ENCODE measurements at regions of chr1 and their contacts with region 1.

Region 1: GRCh38 chr1:153532769-153533599 is 2.8 kb downstream of the S100A6 start:
- DNase-seq: peak; percentile 86
- ATAC-seq: peak; percentile 19
- H3K4me3 Mint-ChIP-seq: peak overlapping the region; percentile 95
- H3K27ac Mint-ChIP-seq: peak overlapping the region; percentile 96
- H3K4me1 Mint-ChIP-seq: peaks cover 61% of the 10 kb centered on the region
- H3K27me3 Mint-ChIP-seq: no peaks in the 10 kb centered on the region
- CTCF ChIP-seq: peak; percentile 87

Region 2: GRCh38 chr1:153510984-153511410 is 22.0 kb before region 1 on chr1:
- CTCF ChIA-PET with region 1: interaction called, 50 read pairs
- POLR2A ChIA-PET with region 1: interaction called, 5 read pairs
- intact Hi-C with region 1: no loop called
- DNase-seq: peak; percentile 88
- ATAC-seq: peak; percentile 94
- H3K4me3 Mint-ChIP-seq: no peak overlapping the region
- H3K27ac Mint-ChIP-seq: peak overlapping the region; percentile 66
- H3K4me1 Mint-ChIP-seq: peaks cover 7% of the 10 kb centered on the region
- H3K27me3 Mint-ChIP-seq: no peaks in the 10 kb centered on the region
- CTCF ChIP-seq: peak; percentile 99

Region 3: DNA sequence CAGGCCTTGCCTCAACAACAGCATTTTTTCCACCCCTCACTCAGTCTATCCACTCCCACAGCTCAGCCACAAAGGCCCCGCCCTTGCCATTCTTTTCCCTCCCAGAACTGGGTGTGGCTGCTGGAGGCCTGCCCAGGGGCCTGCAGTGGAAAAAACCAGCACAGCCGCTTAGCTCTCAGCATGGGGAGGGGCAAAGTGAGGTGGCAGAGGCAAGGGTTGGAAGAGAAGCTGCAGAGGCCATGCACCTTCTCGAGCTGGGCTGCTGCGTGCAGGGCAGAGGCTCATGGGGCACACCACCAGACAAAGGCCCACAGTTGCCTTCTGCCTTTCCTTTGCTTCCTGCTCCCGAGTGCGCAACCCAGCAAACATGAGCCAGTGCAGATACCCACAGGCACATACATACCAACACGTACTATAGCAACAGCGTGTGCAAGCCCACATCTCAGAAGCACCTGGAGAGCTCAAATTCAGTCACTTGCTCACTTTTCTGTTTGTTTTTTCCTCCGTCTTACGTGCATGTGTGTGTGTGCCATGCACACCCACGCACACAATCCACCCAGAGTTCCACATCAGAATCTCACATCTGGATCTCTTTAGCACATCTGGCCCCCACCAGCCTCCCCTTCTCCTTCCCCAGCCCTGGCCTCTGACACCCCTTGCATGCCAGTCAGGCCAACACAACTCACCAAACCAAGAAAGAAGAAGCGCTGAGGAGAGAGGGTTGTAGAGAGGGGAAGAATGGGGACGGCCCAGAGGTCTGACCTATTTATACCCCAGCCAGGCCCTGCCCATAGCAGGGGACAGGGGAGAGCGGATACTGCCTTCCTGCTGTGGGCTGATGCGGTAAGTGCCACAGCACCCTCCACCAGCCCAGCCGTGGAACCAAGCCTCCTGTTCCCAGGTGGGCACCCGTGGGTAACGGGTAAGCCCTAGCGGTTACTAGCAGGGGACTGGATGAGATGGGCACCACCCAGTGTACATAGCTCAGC is 12.4 kb after region 1 on chr1 and contains the start of gene S100A4:
- CTCF ChIA-PET with region 1: interaction called, 49 read pairs
- POLR2A ChIA-PET with region 1: interaction called, 97 read pairs
- intact Hi-C with region 1: no loop called
- DNase-seq: peak; percentile 97
- ATAC-seq: peak; percentile 84
- H3K4me3 Mint-ChIP-seq: peak within 1 kb of the TSS; percentile 90
- H3K27ac Mint-ChIP-seq: peak within 1 kb of the TSS; percentile 99
- H3K4me1 Mint-ChIP-seq: peaks cover 67% of the 10 kb centered on the region
- H3K27me3 Mint-ChIP-seq: no peaks in the 10 kb centered on the region
- CTCF ChIP-seq: no peak
- total RNA-seq, gene S100A4: 109 to 118 TPM

Region 4: DNA sequence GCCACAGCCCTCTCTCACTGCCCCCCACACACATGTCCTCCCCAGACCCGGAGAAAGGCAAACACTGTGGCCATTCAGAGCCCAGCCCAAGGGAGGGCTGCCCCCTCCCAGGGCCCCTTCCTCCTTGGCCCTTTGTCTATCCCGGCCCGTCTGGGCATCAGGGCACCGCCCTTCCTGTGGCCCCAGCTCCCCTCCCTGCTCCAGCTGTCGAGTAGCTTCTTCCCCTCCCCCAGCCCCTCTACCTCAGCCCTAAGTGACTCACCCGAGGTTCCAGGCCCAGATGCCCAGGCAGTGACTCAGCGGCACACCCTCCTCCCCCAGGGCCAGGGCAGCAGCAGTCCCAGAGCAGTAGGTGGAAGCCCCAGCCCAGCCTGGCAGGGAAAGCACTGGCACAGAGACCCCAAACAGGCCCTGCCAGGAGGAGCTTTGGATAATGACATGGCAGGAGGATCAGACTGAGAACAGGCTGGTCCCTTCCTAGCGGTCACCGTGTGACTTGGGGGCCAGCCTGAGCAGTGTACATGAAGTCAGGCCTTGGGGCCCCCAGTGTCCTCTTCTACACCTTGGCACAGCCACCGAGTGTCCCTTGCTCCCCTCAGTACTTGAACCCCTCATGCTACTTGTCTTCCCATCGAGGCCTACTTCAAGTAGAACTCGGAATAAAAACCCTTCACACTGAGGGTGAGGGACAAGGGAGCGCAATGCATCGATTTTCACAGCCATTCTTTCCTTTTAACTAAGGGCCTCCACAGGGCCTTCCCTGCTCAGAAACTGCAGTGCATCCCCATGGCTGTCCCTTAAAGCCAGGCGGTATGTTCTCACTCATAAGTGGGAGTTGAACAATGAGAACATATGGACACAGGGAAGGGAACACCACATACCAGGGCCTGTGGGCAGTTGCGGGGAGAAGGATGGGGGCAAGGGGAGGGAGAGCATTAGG is 33.7 kb after region 1 on chr1:
- CTCF ChIA-PET with region 1: interaction called, 191 read pairs
- POLR2A ChIA-PET with region 1: interaction called, 80 read pairs
- intact Hi-C with region 1: loop called (anchors 2 kb)
- DNase-seq: peak; percentile 95
- ATAC-seq: peak; percentile 87
- H3K4me3 Mint-ChIP-seq: no peak overlapping the region
- H3K27ac Mint-ChIP-seq: peak overlapping the region; percentile 84
- H3K4me1 Mint-ChIP-seq: peaks cover 38% of the 10 kb centered on the region
- H3K27me3 Mint-ChIP-seq: no peaks in the 10 kb centered on the region
- CTCF ChIP-seq: no peak

Region 5: DNA sequence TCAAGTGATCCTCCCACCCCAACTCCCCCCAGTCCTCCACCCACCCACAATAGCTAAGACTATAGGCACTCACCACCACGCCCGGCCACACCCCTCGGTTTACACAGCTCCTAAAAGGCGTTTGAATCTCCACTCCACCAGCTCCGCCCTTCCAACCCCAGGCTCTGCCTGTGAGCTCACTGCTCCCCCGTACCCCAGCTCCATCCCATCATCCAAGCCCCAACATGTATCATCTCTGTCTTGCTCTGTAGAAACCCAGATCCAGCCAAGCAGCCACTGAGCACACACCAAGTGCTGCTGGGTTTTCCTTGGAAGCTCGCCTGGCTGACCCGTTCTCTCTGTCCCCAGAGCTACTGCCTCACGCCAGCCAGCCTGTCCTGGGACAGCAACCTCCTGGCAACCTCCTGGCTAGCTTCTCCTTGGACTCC is 44.7 kb after region 1 on chr1:
- CTCF ChIA-PET with region 1: interaction called, 191 read pairs
- POLR2A ChIA-PET with region 1: interaction called, 80 read pairs
- intact Hi-C with region 1: no loop called
- DNase-seq: no peak
- ATAC-seq: no peak
- H3K4me3 Mint-ChIP-seq: no peak overlapping the region
- H3K27ac Mint-ChIP-seq: no peak overlapping the region
- H3K4me1 Mint-ChIP-seq: peaks cover 8% of the 10 kb centered on the region
- H3K27me3 Mint-ChIP-seq: peaks cover 20% of the 10 kb centered on the region
- CTCF ChIP-seq: no peak

Region 6: GRCh38 chr1:153626922-153627796 is 94.2 kb after region 1 on chr1 and contains the start of gene S100A13:
- CTCF ChIA-PET with region 1: interaction called, 15 read pairs
- POLR2A ChIA-PET with region 1: interaction called, 3 read pairs
- intact Hi-C with region 1: no loop called
- DNase-seq: peak; percentile 44
- ATAC-seq: peak; percentile 63
- H3K4me3 Mint-ChIP-seq: no peak within 1 kb of the TSS
- H3K27ac Mint-ChIP-seq: no peak within 1 kb of the TSS
- H3K4me1 Mint-ChIP-seq: peaks cover 14% of the 10 kb centered on the region
- H3K27me3 Mint-ChIP-seq: peaks cover 9% of the 10 kb centered on the region
- CTCF ChIP-seq: peak; percentile 58
- total RNA-seq, gene S100A13: 8.1 to 9.4 TPM

Region 7: GRCh38 chr1:153639280-153639679 is 106.3 kb after region 1 on chr1:
- CTCF ChIA-PET with region 1: interaction called, 21 read pairs
- POLR2A ChIA-PET with region 1: interaction called, 20 read pairs
- intact Hi-C with region 1: no loop called
- DNase-seq: no peak
- ATAC-seq: no peak
- H3K4me3 Mint-ChIP-seq: no peak overlapping the region
- H3K27ac Mint-ChIP-seq: no peak overlapping the region
- H3K4me1 Mint-ChIP-seq: peaks cover 50% of the 10 kb centered on the region
- H3K27me3 Mint-ChIP-seq: no peaks in the 10 kb centered on the region
- CTCF ChIP-seq: no peak